Activated CD4-positive, alpha-beta T cell treated with anti-CD3 and anti-CD28 coated beads for 36 hours (primary cell): ENCODE measurements at regions of chr6 and their contacts with region 1.

Region 1: GRCh38 chr6:44172731-44173500 is 14.3 kb downstream of the CAPN11 start:
- DNase-seq: peak; percentile 91
- ATAC-seq: peak; percentile 72
- H3K4me3 Mint-ChIP-seq: peak overlapping the region; percentile 73
- H3K27ac Mint-ChIP-seq: peak overlapping the region; percentile 95
- H3K4me1 Mint-ChIP-seq: peaks cover 30% of the 10 kb centered on the region
- H3K27me3 Mint-ChIP-seq: no peaks in the 10 kb centered on the region

Region 2: GRCh38 chr6:44096612-44097011 is 76.3 kb before region 1 on chr6:
- CTCF ChIA-PET with region 1: interaction called, 19 read pairs
- POLR2A ChIA-PET with region 1: no interaction called
- intact Hi-C with region 1: no loop called
- DNase-seq: peak; percentile 87
- ATAC-seq: peak; percentile 90
- H3K4me3 Mint-ChIP-seq: no peak overlapping the region
- H3K27ac Mint-ChIP-seq: no peak overlapping the region
- H3K4me1 Mint-ChIP-seq: no peaks in the 10 kb centered on the region
- H3K27me3 Mint-ChIP-seq: no peaks in the 10 kb centered on the region

Region 3: GRCh38 chr6:44161997-44162338 is 10.9 kb before region 1 on chr6:
- CTCF ChIA-PET with region 1: interaction called, 21 read pairs
- POLR2A ChIA-PET with region 1: no interaction called
- intact Hi-C with region 1: loop called in 1 of 2 experiments (anchors 1 kb)
- DNase-seq: peak; percentile 37
- ATAC-seq: peak; percentile 33
- H3K4me3 Mint-ChIP-seq: no peak overlapping the region
- H3K27ac Mint-ChIP-seq: peak overlapping the region; percentile 53
- H3K4me1 Mint-ChIP-seq: peaks cover 22% of the 10 kb centered on the region
- H3K27me3 Mint-ChIP-seq: no peaks in the 10 kb centered on the region

Region 4: GRCh38 chr6:44190715-44191114 is 17.8 kb after region 1 on chr6:
- CTCF ChIA-PET with region 1: interaction called, 11 read pairs
- POLR2A ChIA-PET with region 1: no interaction called
- intact Hi-C with region 1: loop called in 1 of 2 experiments (anchors 1 kb)
- DNase-seq: peak; percentile 27
- ATAC-seq: peak; percentile 87
- H3K4me3 Mint-ChIP-seq: no peak overlapping the region
- H3K27ac Mint-ChIP-seq: no peak overlapping the region
- H3K4me1 Mint-ChIP-seq: peaks cover 25% of the 10 kb centered on the region
- H3K27me3 Mint-ChIP-seq: peaks cover 7% of the 10 kb centered on the region

Region 5: GRCh38 chr6:44237813-44238433 is 65.0 kb after region 1 on chr6:
- CTCF ChIA-PET with region 1: interaction called, 16 read pairs
- POLR2A ChIA-PET with region 1: no interaction called
- intact Hi-C with region 1: loop called (anchors 1 kb)
- DNase-seq: peak; percentile 88
- ATAC-seq: peak; percentile 78
- H3K4me3 Mint-ChIP-seq: peak overlapping the region; percentile 75
- H3K27ac Mint-ChIP-seq: peak overlapping the region; percentile 94
- H3K4me1 Mint-ChIP-seq: peaks cover 31% of the 10 kb centered on the region
- H3K27me3 Mint-ChIP-seq: no peaks in the 10 kb centered on the region

Region 6: GRCh38 chr6:44251576-44252524 is 78.9 kb after region 1 on chr6:
- CTCF ChIA-PET with region 1: interaction called, 16 read pairs
- POLR2A ChIA-PET with region 1: interaction called, 15 read pairs
- intact Hi-C with region 1: loop called in 1 of 2 experiments (anchors 1 kb)
- DNase-seq: no peak
- ATAC-seq: no peak
- H3K4me3 Mint-ChIP-seq: peak overlapping the region; percentile 97
- H3K27ac Mint-ChIP-seq: peak overlapping the region; percentile 44
- H3K4me1 Mint-ChIP-seq: peaks cover 70% of the 10 kb centered on the region
- H3K27me3 Mint-ChIP-seq: no peaks in the 10 kb centered on the region

Region 7: GRCh38 chr6:44338228-44339122 is 165.6 kb after region 1 on chr6:
- CTCF ChIA-PET with region 1: interaction called, 5 read pairs
- POLR2A ChIA-PET with region 1: no interaction called
- intact Hi-C with region 1: loop called (anchors 1 kb)
- DNase-seq: peak; percentile 81
- ATAC-seq: peak; percentile 84
- H3K4me3 Mint-ChIP-seq: no peak overlapping the region
- H3K27ac Mint-ChIP-seq: no peak overlapping the region
- H3K4me1 Mint-ChIP-seq: peaks cover 5% of the 10 kb centered on the region
- H3K27me3 Mint-ChIP-seq: peaks cover 15% of the 10 kb centered on the region

Region 8: DNA sequence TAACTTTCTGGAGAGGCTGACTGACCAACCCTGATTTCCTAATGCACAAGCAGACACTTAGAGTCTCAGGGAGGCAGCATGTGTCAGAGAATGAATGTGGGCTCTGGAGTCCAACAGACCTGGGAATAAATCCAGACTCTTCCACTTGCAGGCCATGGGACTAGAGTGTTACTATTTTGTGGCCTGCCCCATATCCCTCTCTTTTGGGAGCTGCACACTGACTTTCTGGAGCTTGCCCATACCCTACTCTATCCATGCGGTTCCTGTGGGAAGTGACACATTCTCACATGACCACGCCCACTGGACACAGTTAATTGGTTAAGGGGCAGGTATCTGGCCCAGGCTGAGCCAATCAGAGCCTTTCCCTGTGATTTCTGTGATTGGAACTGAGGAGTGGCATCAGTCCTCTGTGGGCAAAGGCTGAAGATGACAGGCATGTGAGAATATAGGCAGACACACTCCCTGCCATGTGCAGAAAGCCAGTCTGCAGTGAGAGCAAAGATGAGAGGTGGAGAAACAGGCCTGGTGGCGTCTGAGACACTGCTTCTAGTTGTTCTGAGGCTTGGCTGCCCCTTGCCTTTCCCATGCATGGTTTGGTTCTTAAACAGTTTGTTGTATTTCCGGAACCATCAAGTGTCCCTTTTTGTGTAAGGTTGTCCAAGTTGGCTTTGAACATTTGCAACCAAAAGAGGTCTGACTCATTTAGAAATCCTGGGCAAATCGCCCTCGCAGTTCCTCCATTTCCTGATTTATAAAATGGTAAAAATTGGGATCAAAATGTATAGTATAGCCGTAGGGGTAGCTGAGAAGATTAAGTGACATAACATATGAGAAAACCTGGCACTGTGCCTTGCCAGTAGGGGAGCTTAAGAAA is 340.2 kb after region 1 on chr6:
- CTCF ChIA-PET with region 1: no interaction called
- POLR2A ChIA-PET with region 1: no interaction called
- intact Hi-C with region 1: no loop called
- DNase-seq: no peak
- ATAC-seq: peak; percentile 19
- H3K4me3 Mint-ChIP-seq: no peak overlapping the region
- H3K27ac Mint-ChIP-seq: no peak overlapping the region
- H3K4me1 Mint-ChIP-seq: no peaks in the 10 kb centered on the region
- H3K27me3 Mint-ChIP-seq: no peaks in the 10 kb centered on the region

Region 9: GRCh38 chr6:44898296-44898930 is 725.5 kb after region 1 on chr6:
- CTCF ChIA-PET with region 1: no interaction called
- POLR2A ChIA-PET with region 1: no interaction called
- intact Hi-C with region 1: no loop called
- DNase-seq: no peak
- ATAC-seq: no peak
- H3K4me3 Mint-ChIP-seq: no peak overlapping the region
- H3K27ac Mint-ChIP-seq: no peak overlapping the region
- H3K4me1 Mint-ChIP-seq: peaks cover 5% of the 10 kb centered on the region
- H3K27me3 Mint-ChIP-seq: no peaks in the 10 kb centered on the region

Region 10: GRCh38 chr6:45400021-45400420 is 1227.1 kb after region 1 on chr6:
- CTCF ChIA-PET with region 1: no interaction called
- POLR2A ChIA-PET with region 1: no interaction called
- intact Hi-C with region 1: no loop called
- DNase-seq: no peak
- ATAC-seq: no peak
- H3K4me3 Mint-ChIP-seq: no peak overlapping the region
- H3K27ac Mint-ChIP-seq: no peak overlapping the region
- H3K4me1 Mint-ChIP-seq: peaks cover 6% of the 10 kb centered on the region
- H3K27me3 Mint-ChIP-seq: peaks cover 5% of the 10 kb centered on the region